Posterior cingulate gyrus (tissue), 11 donors: ENCODE measurements at regions of chrX and their contacts with region 1.

Region 1: GRCh38 chrX:74536152-74536831 is 78.1 kb downstream of the RLIM start:
- DNase-seq: peak; percentile 20 to 94 (median 58)

Region 2: DNA sequence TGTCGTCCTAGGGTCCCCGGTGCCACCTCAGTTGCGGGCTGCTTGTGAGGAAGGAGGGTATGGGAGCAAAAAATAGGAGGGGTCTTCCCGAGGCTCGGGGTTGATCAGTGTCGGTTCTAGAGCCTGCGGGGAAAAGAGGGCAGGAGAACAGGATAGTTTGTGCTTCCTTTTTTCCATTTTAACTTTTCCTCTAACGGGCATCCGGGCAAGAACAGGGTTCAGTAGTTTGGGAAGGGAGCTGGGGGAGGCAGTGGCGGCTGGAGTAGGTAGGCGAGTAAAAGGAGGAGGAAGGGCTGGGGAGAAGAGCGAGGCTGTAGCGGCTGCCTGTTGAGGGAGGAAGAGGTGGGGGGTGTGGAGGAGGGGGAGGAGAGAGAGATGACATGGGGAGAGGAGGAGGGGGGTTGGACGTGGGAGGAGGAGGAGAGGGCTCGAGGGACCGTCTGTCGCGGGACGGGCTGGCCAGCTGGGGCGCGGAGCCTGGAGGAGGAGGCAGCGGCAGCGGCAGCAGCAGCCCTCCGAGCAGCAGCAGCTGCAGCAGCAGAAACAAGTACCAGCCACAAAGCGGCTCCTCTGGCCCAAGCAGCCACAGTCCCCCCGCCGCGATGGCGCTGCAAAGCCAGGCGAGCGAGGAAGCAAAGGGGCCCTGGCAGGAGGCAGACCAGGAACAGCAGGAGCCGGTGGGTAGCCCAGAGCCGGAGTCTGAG is 115.1 kb before region 1 on chrX and contains the start of gene SLC16A2:
- intact Hi-C with region 1: loop called (anchors 10 kb)
- DNase-seq: peak; percentile 50 to 95 (median 68)